Dorsolateral prefrontal cortex (tissue), 120 donors: ENCODE measurements at regions of chr6 and their contacts with region 1.

Region 1: GRCh38 chr6:90216072-90216977 is 80.3 kb downstream of the BACH2 start:
- DNase-seq: no peak
- H3K4me3 ChIP-seq: no peak overlapping the region
- H3K27ac ChIP-seq: peak overlapping the region in 28 of 59 donors; percentile 2 to 81 (median 32)
- H3K27me3 ChIP-seq: no peaks in the 10 kb centered on the region
- CTCF ChIP-seq: no peak

Region 2: GRCh38 chr6:89970609-89971337 is 245.6 kb before region 1 on chr6:
- intact Hi-C with region 1: loop called (anchors 5 to 10 kb)
- DNase-seq: peak in 7 of 10 donors; percentile 53 to 81 (median 57)
- H3K4me3 ChIP-seq: peak overlapping the region in 3 of 59 donors; percentile 1 to 20 (median 2)
- H3K27ac ChIP-seq: peak overlapping the region in 12 of 59 donors; percentile 10 to 65 (median 19)
- H3K27me3 ChIP-seq: no peaks in the 10 kb centered on the region
- CTCF ChIP-seq: peak; percentile 21 to 83 (median 70)

Region 3: GRCh38 chr6:90078513-90079289 is 137.6 kb before region 1 on chr6:
- intact Hi-C with region 1: loop called (anchors 2 to 10 kb)
- DNase-seq: no peak
- H3K4me3 ChIP-seq: no peak overlapping the region
- H3K27ac ChIP-seq: peak overlapping the region in 8 of 59 donors; percentile 1 to 44 (median 18)
- H3K27me3 ChIP-seq: no peaks in the 10 kb centered on the region
- CTCF ChIP-seq: no peak

Region 4: GRCh38 chr6:90156861-90157260 is 59.5 kb before region 1 on chr6:
- intact Hi-C with region 1: loop called in 1 of 2 experiments (anchors 5 kb)
- DNase-seq: no peak
- H3K4me3 ChIP-seq: no peak overlapping the region
- H3K27ac ChIP-seq: peak overlapping the region in 1 of 59 donors; percentile 16
- H3K27me3 ChIP-seq: no peaks in the 10 kb centered on the region
- CTCF ChIP-seq: no peak

Region 5: DNA sequence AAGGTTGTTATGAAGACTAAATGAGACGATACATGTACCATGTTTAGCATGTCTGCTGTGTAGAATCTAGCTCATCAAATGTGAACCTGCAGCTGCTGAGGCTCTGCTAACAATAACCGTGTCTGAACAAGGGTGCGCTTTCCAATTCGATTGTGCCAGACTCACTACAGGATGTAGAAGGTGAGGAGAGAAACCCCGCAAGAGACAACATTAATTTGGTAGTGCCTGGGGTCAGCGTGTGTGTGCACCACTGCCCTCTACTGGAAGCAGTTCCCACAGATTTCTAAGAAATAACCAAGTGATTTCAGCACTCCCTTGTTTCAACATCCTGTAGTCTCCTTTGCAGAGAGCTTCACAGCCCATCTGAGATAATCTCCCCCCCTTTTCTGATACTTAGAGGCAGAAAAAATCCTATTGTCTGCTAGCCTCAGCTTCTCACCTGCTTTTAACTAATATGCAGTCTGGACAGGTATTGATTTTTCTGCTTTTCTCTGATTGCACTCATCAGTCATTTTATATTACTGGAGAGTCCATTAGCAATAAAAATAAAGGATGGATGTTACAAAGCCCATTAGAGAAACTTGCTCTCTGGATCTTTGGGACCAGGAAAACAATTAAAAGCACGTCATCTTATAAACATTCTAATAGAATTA is 177.0 kb after region 1 on chr6:
- intact Hi-C with region 1: loop called in 1 of 2 experiments (anchors 5 kb)
- DNase-seq: peak in 6 of 10 donors; percentile 32 to 62 (median 54)
- H3K4me3 ChIP-seq: peak overlapping the region in 1 of 59 donors; percentile 20
- H3K27ac ChIP-seq: no peak overlapping the region
- H3K27me3 ChIP-seq: no peaks in the 10 kb centered on the region
- CTCF ChIP-seq: peak; percentile 62 to 88 (median 79)